ENCODE measurements at regions of chr19 and their contacts with region 1.

Region 1: DNA sequence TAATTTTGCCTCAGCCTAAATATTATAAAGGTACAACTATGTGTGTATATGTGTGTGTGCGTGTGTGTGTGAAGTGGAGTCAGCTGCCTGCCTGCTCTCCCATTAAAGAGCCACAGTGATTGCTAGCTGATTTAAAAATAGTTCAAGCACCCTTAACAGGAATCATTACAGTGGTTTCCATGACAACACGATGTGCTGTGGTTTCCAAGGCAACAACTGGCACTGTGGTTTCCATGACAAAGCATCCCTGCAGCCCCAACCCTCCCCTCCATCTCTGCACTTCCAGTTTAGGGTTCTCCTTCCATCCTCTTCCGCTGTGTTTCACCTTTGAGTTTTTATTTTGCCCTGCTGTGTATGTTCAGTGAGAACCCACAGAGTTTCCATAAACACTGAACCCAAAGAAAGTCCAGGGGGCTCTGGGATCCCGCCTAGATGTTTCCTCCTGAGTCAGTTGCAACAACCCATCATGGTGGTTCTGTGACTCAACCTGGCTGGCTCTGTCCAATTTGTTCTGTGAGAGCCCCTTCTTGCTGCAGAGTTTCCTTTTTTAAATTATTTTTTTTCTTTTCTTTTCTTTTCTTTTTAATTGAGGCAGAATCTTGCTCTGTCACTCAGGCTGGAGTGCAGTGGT is 7.1 kb upstream of the PNMA8A start:
- DNase-seq: no peak
- H3K4me3 ChIP-seq: no peak overlapping the region
- H3K27ac ChIP-seq: no peak overlapping the region
- H3K27me3 ChIP-seq: no peaks in the 10 kb centered on the region
- CTCF ChIP-seq: no peak

Region 2: DNA sequence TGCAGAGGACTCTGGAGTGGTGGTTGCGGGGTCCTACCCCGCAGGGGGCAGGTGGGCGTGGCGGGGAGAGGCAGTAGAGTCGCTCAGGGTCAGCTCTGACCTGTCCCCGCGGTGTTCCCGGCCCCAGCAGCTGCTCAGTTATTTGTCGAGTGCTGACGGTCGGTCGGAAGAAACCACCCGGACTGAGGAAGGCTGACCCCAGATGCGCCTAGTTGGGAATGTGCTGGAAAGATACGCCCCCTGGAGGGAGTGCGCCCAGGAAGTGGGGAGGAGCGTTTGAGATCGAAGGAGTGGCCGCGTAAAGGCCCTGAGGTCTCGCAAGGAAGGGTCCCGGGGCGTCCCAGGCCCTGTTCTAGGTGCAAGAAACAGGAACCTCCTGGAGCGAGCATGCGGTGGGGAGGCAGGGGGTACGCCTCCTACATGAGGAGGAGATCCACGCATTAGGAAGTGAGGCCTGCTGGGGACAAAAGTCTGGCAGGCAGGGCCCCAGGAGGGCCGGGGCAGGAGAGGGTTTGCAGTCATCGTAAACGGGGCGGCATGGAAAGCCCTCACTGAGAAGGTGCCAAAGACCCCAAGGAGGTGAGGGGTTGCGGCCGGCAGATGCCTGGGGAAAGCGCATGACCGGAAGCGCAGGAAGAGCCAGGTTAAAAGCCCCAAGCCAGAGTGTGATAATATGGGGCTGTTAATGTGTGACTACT is 74.3 kb before region 1 on chr19:
- CTCF ChIA-PET with region 1: interaction called, 26 read pairs
- POLR2A ChIA-PET with region 1: no interaction called
- DNase-seq: no peak
- H3K4me3 ChIP-seq: peak overlapping the region; percentile 47
- H3K27ac ChIP-seq: peak overlapping the region; percentile 31
- H3K27me3 ChIP-seq: no peaks in the 10 kb centered on the region
- CTCF ChIP-seq: peak; percentile 44

Region 3: GRCh38 chr19:46413262-46414031 is 65.0 kb before region 1 on chr19 and contains the start of gene CCDC8:
- CTCF ChIA-PET with region 1: no interaction called
- POLR2A ChIA-PET with region 1: interaction called, 10 read pairs
- DNase-seq: peak; percentile 87
- H3K4me3 ChIP-seq: peak within 1 kb of the TSS; percentile 74
- H3K27ac ChIP-seq: peak within 1 kb of the TSS; percentile 65
- H3K27me3 ChIP-seq: peaks cover 3% of the 10 kb centered on the region
- CTCF ChIP-seq: no peak
- polyA plus RNA-seq, gene CCDC8: 9.2 and 10.5 TPM in 2 replicates

Region 4: DNA sequence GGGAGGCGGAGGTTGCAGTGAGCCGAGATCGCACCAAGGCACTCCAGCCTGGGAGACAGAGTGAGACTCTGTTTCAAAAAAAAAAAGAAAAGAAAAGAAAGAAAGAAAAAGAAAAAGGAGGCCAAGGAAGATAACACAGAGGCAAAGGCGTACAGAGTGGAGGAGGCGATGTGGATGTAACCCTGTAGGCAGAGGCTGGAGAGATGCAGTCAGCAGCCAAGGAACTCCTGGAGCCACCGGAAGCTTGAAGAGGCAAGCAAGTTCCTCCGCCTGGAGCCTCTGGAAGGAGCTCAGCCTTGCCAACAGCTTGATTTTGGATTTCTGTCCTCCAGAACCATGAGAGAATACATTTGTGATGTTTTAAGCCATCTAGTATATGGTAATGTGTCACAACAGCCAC is 58.4 kb before region 1 on chr19:
- CTCF ChIA-PET with region 1: no interaction called
- POLR2A ChIA-PET with region 1: interaction called, 13 read pairs
- DNase-seq: no peak
- H3K4me3 ChIP-seq: no peak overlapping the region
- H3K27ac ChIP-seq: no peak overlapping the region
- H3K27me3 ChIP-seq: no peaks in the 10 kb centered on the region
- CTCF ChIP-seq: no peak

Region 5: GRCh38 chr19:46503848-46504453 is 25.5 kb after region 1 on chr19:
- CTCF ChIA-PET with region 1: no interaction called
- POLR2A ChIA-PET with region 1: no interaction called
- DNase-seq: no peak
- H3K4me3 ChIP-seq: no peak overlapping the region
- H3K27ac ChIP-seq: no peak overlapping the region
- H3K27me3 ChIP-seq: peaks cover 12% of the 10 kb centered on the region
- CTCF ChIP-seq: no peak